ENCODE measurements at regions of chr11 and their contacts with region 1.

Region 1: DNA sequence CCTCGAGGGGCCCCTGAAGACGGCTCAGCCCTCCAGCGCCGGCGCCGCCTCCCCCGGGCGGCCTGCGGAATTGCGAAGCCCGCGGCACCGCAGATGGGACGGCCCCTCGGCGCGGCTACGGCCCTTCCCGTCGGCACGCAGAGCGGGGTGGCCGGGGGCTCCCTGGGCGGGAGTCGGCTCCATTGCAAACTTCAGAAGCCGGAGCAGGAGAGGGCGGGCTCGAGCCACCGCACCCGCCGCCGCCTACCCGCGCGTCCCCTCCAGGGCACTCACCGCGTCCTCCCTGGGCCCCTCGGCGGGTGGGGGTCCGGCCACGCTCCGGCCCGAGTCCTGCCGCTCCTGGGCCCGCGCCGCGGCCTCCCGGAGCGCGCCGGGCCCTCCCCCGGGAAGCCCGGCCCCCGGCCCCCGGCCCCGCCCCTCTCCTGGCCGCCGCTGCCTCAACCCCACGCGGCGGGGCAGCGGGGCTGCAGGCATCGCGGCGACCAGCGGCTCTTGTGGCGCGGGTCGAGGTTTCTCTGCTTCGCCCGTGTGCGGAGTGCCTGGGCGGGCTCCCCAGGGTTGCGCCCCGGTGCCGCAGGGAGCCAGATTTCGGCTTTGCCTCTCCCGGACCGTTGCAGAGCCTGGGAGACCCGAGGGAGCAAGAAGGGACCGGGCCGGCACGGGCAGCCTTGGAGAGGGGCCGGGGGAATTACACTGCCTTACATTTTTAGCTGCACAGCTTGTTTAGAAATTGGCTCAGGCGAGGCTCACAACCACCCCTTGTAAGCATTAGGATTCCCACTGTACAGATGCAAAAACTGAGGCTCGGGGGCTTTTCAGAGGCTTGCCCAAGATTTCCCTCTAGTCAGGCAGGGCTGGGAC is at the start of gene PACSIN3:
- DNase-seq: peak; percentile 69
- ATAC-seq: peak; percentile 8
- H3K4me3 Mint-ChIP-seq: peak within 1 kb of the TSS; percentile 81
- H3K27ac Mint-ChIP-seq: peak within 1 kb of the TSS; percentile 86
- H3K4me1 Mint-ChIP-seq: peaks cover 19% of the 10 kb centered on the region
- H3K27me3 Mint-ChIP-seq: peaks cover 9% of the 10 kb centered on the region
- CTCF ChIP-seq: no peak
- total RNA-seq, gene PACSIN3: 74.5 to 77.1 TPM (median 76.8 TPM) in 3 replicates

Region 2: DNA sequence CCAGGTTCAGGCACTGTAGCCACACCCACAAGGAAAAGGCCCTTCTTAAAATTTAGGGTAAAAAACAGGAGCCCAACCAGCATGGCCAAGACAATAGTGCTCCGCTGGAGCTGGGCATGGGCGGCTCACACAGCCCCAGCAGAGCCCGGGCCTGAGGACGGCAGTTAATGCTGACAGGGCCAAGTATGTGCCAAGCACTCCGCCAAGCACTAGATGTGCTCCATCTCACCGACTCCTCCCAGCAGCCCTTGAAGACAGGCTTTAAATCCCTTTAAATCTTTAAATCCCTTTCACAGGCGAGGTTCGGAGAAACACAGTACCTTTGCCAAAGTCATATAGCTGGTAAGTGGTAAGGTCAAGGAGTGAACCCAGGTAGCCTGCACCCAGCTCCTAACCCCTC is 14.4 kb before region 1 on chr11:
- CTCF ChIA-PET with region 1: no interaction called
- POLR2A ChIA-PET with region 1: no interaction called
- DNase-seq: no peak
- ATAC-seq: no peak
- H3K4me3 Mint-ChIP-seq: no peak overlapping the region
- H3K27ac Mint-ChIP-seq: no peak overlapping the region; the same call in 1 of the 2 replicates
- H3K4me1 Mint-ChIP-seq: peaks cover 7% of the 10 kb centered on the region
- H3K27me3 Mint-ChIP-seq: no peaks in the 10 kb centered on the region
- CTCF ChIP-seq: no peak

Region 3: DNA sequence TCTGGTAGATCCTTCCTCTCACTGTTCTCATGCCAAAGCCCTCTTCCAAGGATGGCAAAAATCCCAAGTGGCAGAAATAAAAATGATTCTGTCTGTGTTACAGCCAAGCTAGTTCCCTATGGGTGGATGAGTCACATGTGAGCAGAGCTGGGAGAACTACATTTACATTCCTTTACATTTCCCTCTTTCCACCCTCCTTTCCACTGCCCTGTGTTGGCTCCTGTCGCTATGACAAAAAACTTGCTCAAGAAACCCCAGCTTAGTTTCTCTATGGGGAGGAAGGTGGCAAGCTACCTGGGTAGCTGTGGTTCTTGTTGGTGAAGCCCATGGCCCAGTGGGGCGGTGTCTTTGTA is 18.3 kb after region 1 on chr11:
- CTCF ChIA-PET with region 1: interaction called, 5 read pairs
- POLR2A ChIA-PET with region 1: interaction called, 13 read pairs
- DNase-seq: no peak
- ATAC-seq: peak; percentile 95
- H3K4me3 Mint-ChIP-seq: no peak overlapping the region
- H3K27ac Mint-ChIP-seq: peak overlapping the region; percentile 64
- H3K4me1 Mint-ChIP-seq: peaks cover 14% of the 10 kb centered on the region
- H3K27me3 Mint-ChIP-seq: no peaks in the 10 kb centered on the region
- CTCF ChIP-seq: no peak

Region 4: DNA sequence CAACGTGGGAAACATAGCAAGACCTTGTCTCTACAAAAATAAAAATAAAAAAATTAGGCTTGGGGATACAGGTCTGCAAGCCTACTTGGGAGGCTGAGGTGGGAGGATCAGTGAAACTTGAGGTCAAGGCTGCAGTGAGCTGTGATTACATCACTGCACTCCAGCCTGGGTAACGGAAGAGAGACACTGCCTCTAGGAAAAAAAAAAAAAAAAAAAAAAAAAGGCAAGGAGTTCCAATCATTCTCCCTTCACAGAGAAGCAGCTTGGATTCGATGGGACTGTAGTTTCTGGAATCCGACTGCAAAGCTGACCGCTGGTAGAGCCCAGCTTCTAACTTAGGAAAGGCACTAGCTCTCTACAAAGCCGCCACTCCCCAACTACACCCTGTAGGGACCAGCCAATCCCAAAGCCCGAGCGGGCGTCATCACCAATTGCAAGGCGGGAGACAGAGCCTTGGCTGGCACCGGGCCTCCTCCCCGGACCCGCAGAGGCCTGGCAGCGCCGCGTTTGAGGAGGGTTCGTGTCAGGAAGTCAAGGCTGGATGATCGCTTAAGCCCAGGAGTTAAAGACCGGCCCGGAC is 27.8 kb after region 1 on chr11:
- CTCF ChIA-PET with region 1: interaction called, 28 read pairs
- POLR2A ChIA-PET with region 1: interaction called, 114 read pairs
- DNase-seq: peak; percentile 86
- ATAC-seq: peak; percentile 89
- H3K4me3 Mint-ChIP-seq: peak overlapping the region; percentile 97
- H3K27ac Mint-ChIP-seq: peak overlapping the region; percentile 100
- H3K4me1 Mint-ChIP-seq: peaks cover 29% of the 10 kb centered on the region
- H3K27me3 Mint-ChIP-seq: no peaks in the 10 kb centered on the region; the same call in 1 of the 2 replicates
- CTCF ChIP-seq: no peak

Region 5: GRCh38 chr11:47222696-47223095 is 36.4 kb after region 1 on chr11:
- CTCF ChIA-PET with region 1: no interaction called
- POLR2A ChIA-PET with region 1: interaction called, 12 read pairs
- DNase-seq: no peak
- ATAC-seq: no peak
- H3K4me3 Mint-ChIP-seq: no peak overlapping the region
- H3K27ac Mint-ChIP-seq: no peak overlapping the region
- H3K4me1 Mint-ChIP-seq: peaks cover 8% of the 10 kb centered on the region
- H3K27me3 Mint-ChIP-seq: no peaks in the 10 kb centered on the region
- CTCF ChIP-seq: no peak

Region 6: GRCh38 chr11:47233989-47234668 is 47.8 kb after region 1 on chr11:
- CTCF ChIA-PET with region 1: interaction called, 29 read pairs
- POLR2A ChIA-PET with region 1: interaction called, 17 read pairs
- DNase-seq: peak; percentile 22
- ATAC-seq: peak; percentile 86
- H3K4me3 Mint-ChIP-seq: no peak overlapping the region
- H3K27ac Mint-ChIP-seq: peak overlapping the region; percentile 75
- H3K4me1 Mint-ChIP-seq: peaks cover 3% of the 10 kb centered on the region; the same call in 1 of the 2 replicates
- H3K27me3 Mint-ChIP-seq: no peaks in the 10 kb centered on the region
- CTCF ChIP-seq: no peak

Region 7: DNA sequence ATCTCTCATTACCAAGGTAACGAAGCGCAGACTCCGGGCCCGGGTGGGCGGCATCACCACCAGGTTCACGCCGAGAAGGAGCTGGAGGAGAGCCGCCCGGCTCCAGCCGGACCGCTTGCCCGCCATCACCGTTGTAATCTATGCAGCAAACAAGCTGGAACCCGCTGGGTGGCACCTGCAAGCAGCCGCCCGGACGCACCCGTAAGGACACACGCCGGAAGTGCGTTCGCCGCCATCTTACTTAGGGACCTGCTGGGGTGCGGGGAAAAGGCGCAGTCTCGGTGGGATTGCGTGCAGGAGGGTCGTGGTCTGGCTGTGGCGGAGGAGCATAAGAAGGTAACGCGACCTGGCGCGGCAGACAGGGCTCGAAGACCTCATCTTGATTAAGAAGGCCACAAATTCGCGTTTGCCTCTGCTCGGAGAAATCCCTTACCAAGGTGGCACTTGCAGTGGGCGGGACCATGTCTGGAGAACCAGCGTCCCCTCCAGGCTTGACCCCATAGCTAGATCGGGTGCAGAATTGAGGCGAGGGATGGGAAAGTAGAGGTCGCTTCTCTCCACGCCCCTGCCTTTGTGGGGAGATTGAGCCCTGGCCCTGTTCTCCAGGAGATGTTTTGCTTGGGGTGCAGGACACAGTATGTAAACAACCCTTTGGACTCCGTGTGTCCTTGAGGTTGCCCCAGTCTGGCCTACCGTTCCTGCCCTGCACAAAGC is 62.5 kb after region 1 on chr11 and contains the start of gene ACP2:
- CTCF ChIA-PET with region 1: interaction called, 11 read pairs
- POLR2A ChIA-PET with region 1: interaction called, 13 read pairs
- DNase-seq: peak; percentile 91
- ATAC-seq: peak; percentile 93
- H3K4me3 Mint-ChIP-seq: peak within 1 kb of the TSS; percentile 98
- H3K27ac Mint-ChIP-seq: peak within 1 kb of the TSS; percentile 100
- H3K4me1 Mint-ChIP-seq: peaks cover 9% of the 10 kb centered on the region
- H3K27me3 Mint-ChIP-seq: no peaks in the 10 kb centered on the region
- CTCF ChIP-seq: no peak
- total RNA-seq, gene ACP2: 18.7 to 19.6 TPM (median 19.2 TPM) in 3 replicates

Measured in WTC11 (cell line).